ENCODE measurements at regions of chr5 and their contacts with region 1.

Region 1: DNA sequence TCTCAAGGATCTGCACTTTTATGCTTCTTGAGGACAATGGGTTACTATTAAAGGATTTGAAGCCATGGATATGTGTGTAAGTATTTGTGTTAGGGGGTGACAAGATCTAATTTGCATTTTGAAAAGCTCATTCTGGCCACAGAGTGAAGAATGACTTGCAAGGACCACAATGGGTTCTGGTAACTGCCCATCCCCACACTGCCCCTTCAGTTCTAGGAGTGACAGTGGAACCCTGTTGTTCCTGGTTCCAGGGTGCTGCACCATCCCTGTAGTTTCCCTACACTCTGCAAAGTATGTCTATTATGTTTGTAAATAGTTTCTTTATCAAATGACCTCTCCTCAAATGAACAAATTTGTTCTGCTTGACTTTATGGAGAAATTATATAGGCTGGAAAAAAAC is 9.7 kb upstream of the SPRY4 start:
- DNase-seq: no peak
- H3K4me3 ChIP-seq: no peak overlapping the region
- H3K4me3 Mint-ChIP-seq: no peak overlapping the region
- H3K27ac Mint-ChIP-seq: no peak overlapping the region
- H3K4me1 ChIP-seq: no peaks in the 10 kb centered on the region
- H3K4me1 Mint-ChIP-seq: peaks cover 7% of the 10 kb centered on the region
- H3K27me3 ChIP-seq: no peaks in the 10 kb centered on the region
- H3K27me3 Mint-ChIP-seq: no peaks in the 10 kb centered on the region
- CTCF ChIP-seq: no peak

Region 2: DNA sequence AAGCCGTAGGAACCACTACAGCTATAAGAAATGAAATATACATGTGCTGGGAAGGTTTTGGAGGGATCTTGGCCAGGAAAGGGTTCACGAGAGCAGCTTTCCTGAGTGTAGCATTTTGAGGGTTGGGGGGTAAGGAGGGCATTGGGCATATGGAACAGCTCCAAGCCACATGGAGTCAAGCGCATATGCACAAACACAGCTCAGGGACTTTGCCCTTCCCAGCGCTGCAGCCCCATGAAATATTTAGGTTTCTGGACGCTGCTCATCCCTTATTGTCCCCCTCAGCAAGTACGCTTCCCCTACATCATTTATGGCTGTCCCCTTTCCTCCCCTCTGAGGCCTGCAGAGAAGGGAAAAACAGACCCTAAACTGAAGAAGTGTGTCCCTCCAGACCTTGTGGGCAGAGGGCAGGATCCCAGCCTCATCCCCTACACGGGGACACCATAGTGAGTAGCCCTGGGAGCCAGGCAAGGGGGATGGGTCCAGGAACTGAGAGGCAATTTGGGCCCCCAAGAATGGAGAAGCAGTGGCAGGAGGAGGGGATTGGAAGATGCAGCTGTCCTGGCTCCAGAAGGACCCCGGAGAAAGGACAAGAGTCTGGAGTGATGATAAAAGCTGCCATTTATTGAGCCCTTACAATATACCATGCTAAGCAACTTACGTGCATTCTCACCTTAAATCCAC is 490.0 kb before region 1 on chr5:
- CTCF ChIA-PET with region 1: interaction called, 12 read pairs
- POLR2A ChIA-PET with region 1: no interaction called
- intact Hi-C with region 1: no loop called
- DNase-seq: no peak
- H3K4me3 ChIP-seq: no peak overlapping the region
- H3K4me3 Mint-ChIP-seq: no peak overlapping the region
- H3K27ac Mint-ChIP-seq: no peak overlapping the region
- H3K4me1 ChIP-seq: peaks cover 30% of the 10 kb centered on the region
- H3K4me1 Mint-ChIP-seq: peaks cover 35% of the 10 kb centered on the region
- H3K27me3 ChIP-seq: no peaks in the 10 kb centered on the region
- H3K27me3 Mint-ChIP-seq: no peaks in the 10 kb centered on the region
- CTCF ChIP-seq: no peak

Region 3: GRCh38 chr5:142364251-142365145 is 30.0 kb after region 1 on chr5:
- CTCF ChIA-PET with region 1: no interaction called
- POLR2A ChIA-PET with region 1: no interaction called
- intact Hi-C with region 1: no loop called
- DNase-seq: no peak
- H3K4me3 ChIP-seq: no peak overlapping the region
- H3K4me3 Mint-ChIP-seq: no peak overlapping the region
- H3K27ac Mint-ChIP-seq: no peak overlapping the region
- H3K4me1 ChIP-seq: peaks cover 25% of the 10 kb centered on the region
- H3K4me1 Mint-ChIP-seq: peaks cover 22% of the 10 kb centered on the region
- H3K27me3 ChIP-seq: no peaks in the 10 kb centered on the region
- H3K27me3 Mint-ChIP-seq: no peaks in the 10 kb centered on the region
- CTCF ChIP-seq: no peak